ENCODE measurements at regions of chr21 and their contacts with region 1.

Region 1: DNA sequence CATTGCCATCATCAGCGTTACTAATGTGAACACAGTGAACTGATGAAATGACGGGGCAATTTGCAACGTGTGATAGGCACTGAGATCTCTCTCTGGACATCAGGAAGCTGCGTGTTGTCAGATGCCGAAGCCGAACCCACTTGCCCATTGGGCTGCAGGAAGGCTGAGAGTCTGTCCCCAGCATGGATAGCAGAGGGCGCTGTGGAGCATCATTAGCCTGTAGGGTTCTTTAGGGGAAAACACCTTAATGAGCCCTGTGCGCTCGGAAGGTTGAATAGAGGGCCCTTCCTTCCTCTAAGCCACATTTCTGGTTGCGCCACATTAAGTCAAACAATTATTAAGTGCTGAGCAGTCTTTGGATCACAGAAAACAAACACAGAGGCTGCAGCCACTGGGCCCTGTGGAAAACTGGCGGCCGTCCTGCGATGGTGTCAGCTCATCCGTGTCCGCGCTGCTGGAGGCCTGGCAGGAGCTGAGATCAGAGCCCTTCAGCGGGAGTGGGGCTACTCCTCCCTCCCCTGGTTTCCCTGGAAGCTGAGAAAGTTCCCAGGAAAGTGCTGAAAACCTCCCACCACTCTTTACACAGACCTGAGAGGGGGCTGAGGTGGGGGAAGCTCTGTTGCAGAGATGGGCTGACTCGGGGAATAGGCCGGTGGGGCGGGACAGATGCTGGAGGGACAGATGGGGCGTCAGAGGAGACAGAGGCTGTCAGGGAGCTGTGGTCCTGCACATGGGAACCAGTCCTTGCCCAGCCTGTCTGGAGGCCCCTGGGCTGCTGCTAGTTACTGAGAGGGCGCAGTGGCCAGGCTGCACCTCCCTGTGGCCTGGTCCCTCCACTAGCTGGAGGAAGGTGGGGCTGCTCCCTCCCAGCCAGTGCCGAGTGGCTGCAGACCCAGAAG is 12.7 kb downstream of the TFF2 start:
- DNase-seq: peak; percentile 18 to 42
- ATAC-seq: peak; percentile 69 to 89
- H3K4me3 ChIP-seq: peak overlapping the region in 1 of 4 donors; percentile 30
- H3K27ac ChIP-seq: no peak overlapping the region
- H3K4me1 ChIP-seq: no peaks in the 10 kb centered on the region
- H3K27me3 ChIP-seq: peaks cover 7 to 18% (median 8%) of the 10 kb centered on the region in 3 donors
- CTCF ChIP-seq: peak in 3 of 5 experiments; percentile 45 to 62 (median 50)
- POLR2A ChIP-seq: no peak

Region 2: DNA sequence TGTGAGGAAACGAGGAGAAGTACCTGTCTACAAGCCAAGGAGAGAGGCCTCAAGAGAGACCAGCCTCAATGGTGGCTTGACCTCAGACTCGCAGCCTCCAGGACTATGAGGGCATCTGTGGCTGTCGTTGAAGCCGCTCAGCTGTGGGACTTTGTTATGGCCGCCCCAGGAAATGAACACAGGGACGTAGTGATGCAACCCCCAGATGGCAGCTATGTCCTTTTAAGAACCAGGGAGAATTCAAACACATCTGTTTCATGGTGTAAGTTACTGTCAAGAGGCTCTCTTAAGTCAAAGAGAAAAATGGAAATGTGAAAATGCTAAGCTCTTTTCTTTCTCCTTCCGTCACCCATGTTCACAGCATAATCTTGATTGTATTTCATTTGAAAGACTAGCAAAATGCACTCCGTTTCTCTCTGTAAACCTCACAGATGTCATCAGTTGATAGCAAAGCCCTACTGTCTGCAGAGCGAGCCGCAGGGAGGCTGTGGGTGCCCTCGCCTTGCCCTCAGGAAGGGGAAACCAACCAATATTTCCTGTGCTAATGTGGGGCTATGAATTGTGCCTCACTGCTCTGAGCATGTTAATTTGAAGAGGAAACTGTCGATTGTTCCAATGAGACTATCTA is 86.9 kb after region 1 on chr21:
- in situ Hi-C with region 1: loop called in 1 of 4 experiments (anchors 25 kb)
- intact Hi-C with region 1: no loop called
- DNase-seq: no peak
- ATAC-seq: no peak
- H3K4me3 ChIP-seq: no peak overlapping the region
- H3K27ac ChIP-seq: no peak overlapping the region
- H3K4me1 ChIP-seq: no peaks in the 10 kb centered on the region
- H3K27me3 ChIP-seq: peaks cover 5 to 32% (median 24%) of the 10 kb centered on the region in 3 donors
- CTCF ChIP-seq: no peak
- POLR2A ChIP-seq: no peak

Region 3: DNA sequence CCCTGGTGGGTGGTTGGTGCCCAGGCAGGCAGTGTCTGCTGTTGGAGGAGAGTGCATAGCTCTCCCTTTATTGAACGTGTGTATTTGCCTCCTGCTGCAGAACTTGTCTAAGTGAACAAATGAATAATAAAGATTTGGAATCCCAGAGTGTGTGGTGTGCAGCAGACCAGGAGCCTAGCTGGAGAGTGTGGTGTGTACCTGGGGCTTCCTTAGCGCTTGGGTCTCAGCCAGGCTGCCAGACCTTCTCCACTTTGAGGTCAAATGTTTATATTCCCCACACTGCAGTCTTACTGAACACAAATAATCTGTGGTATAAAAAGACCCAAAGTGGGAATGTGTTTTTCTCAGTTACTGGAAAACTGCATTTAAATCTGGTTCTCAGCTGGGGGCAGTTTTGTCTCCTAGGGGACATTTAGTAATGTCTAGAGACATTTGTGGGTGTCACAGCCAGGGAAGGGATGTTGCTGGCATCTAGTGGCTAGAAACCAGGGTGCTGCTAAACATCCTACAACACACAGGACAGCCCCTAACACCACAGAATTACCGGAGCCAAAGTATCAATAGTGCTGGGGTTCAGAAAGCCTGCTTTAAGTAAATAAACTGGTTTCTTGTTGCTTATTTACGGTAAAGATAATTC is 199.1 kb after region 1 on chr21:
- in situ Hi-C with region 1: no loop called
- intact Hi-C with region 1: loop called (anchors 10 kb)
- DNase-seq: no peak
- ATAC-seq: no peak
- H3K4me3 ChIP-seq: no peak overlapping the region
- H3K27ac ChIP-seq: peak overlapping the region in 1 of 4 donors; percentile 2
- H3K4me1 ChIP-seq: peaks cover 18 to 28% of the 10 kb centered on the region in 2 donors
- H3K27me3 ChIP-seq: no peaks in the 10 kb centered on the region
- CTCF ChIP-seq: peak in 4 of 5 experiments; percentile 32 to 49 (median 36)
- POLR2A ChIP-seq: no peak